ENCODE measurements at regions of chr3 and their contacts with region 1.

Region 1: DNA sequence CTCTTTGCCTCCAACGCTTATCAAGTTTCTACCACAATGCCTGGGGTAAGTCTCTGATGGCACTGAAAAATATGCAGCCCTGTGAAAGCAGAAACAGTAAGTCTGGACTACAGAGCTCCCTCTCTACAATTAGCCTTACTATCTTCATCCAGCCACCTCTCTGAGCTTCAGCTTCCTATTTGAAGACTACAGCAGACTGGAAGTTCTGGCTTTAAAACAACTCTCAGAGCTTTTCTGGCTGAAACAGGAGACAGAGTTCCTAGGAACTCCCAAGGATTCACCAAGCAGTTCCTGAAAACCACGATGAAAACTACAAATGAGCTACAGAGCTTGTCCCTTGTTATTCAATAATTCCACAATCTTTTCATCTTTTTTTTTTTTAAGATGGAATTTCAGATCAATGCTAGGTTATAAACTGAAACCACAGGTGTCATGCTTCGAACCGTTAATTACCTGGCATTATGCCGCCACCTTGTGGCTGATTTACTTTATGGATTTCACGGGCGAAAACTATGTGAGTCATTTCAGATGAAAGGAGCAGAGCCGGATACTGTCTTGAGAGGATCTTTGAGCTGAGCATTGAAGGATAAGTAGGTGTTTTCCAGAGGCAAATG is 3.9 kb downstream of the CRYGS start:
- DNase-seq: peak; percentile 82
- H3K4me3 ChIP-seq: no peak overlapping the region
- H3K27ac ChIP-seq: peak overlapping the region; percentile 46
- H3K4me1 ChIP-seq: peaks cover 20% of the 10 kb centered on the region
- H3K27me3 ChIP-seq: no peaks in the 10 kb centered on the region
- CTCF ChIP-seq: peak; percentile 43 to 66
- POLR2A ChIP-seq: no peak

Region 2: DNA sequence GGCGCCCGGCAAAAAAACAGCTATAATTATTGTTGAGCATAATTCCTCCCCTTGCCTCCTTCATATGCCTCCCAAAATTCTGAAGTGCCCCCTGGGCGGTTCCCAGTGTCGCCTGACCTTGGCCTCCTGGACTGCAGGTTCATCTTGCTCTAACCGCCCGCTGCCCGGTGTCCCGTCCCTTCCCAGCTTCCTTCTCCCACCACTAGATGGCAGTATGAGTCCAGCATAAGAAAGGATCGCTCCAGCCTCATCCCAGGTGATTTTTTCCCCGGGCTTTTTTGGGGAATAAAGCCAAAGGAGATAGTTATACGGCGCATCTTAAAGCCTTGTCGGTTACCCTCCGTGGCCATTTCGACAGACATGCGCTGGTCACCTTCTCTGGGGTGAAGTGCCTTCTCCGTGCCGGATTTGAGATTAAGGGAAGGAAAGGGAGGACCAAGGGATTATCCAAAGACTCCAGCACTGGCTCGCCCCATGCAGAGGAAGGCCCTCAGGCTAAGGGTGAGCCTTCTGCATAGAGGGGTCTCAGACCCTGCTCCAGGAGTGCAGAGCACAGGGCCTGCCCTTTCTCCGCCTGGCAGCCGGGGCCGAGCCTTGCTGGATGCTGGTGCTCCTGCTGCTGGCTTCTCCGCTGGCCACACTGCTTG is 556.7 kb before region 1 on chr3:
- CTCF ChIA-PET with region 1: interaction called, 187 read pairs
- POLR2A ChIA-PET with region 1: no interaction called
- dilution Hi-C with region 1: no loop called
- intact Hi-C with region 1: loop called (anchors 1 kb)
- DNase-seq: peak; percentile 55
- H3K4me3 ChIP-seq: no peak overlapping the region
- H3K27ac ChIP-seq: no peak overlapping the region
- H3K4me1 ChIP-seq: peaks cover 6% of the 10 kb centered on the region
- H3K27me3 ChIP-seq: no peaks in the 10 kb centered on the region
- CTCF ChIP-seq: peak; percentile 77 to 88
- POLR2A ChIP-seq: no peak

Region 3: DNA sequence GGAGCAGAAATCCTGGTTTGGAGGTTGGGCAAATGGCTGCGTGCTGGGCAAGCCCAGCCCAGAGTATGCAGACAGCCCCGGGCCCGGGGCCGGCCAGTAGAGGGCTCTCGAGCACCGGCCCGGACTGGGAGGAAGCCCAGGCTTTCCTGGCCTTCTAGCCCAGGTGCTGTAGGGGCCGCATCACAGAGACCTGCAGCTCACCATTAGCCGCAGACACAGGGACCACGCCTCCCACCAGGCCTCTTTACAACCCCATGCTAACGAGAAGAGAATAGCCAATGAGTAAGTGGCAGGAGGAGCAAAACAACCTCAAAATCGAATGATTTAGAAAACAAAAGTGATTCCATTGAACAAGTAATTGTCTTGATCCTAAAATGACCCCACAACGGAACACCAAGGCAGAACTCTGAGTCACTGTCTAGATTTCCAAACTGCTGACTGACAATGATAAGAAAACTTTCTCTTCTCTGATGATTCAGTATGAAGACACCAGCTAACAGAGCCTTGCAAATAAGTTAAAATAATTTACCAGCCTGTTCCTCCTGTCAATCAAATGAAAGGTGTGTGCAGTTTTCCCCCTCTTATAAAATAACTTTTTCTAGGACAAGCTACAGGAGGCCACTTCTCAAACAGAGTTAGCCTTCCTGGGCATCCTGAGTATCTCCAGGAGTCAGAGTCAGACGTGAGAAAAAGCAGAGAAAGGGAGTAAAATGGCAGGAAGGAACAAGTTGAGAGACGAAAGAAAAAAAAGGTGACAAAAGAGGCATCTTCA is 280.5 kb before region 1 on chr3:
- CTCF ChIA-PET with region 1: interaction called, 124 read pairs
- POLR2A ChIA-PET with region 1: no interaction called
- dilution Hi-C with region 1: no loop called
- intact Hi-C with region 1: loop called (anchors 1 kb)
- DNase-seq: peak; percentile 58
- H3K4me3 ChIP-seq: no peak overlapping the region
- H3K27ac ChIP-seq: no peak overlapping the region
- H3K4me1 ChIP-seq: no peaks in the 10 kb centered on the region
- H3K27me3 ChIP-seq: no peaks in the 10 kb centered on the region
- CTCF ChIP-seq: peak; percentile 87 to 98
- POLR2A ChIP-seq: no peak

Region 4: GRCh38 chr3:186277268-186277909 is 262.9 kb before region 1 on chr3:
- CTCF ChIA-PET with region 1: interaction called, 10 read pairs
- POLR2A ChIA-PET with region 1: no interaction called
- dilution Hi-C with region 1: no loop called
- intact Hi-C with region 1: no loop called
- DNase-seq: peak; percentile 49
- H3K4me3 ChIP-seq: no peak overlapping the region
- H3K27ac ChIP-seq: no peak overlapping the region
- H3K4me1 ChIP-seq: no peaks in the 10 kb centered on the region
- H3K27me3 ChIP-seq: peaks cover 0 to 3% of the 10 kb centered on the region in 2 experiments
- CTCF ChIP-seq: peak; percentile 20 to 41
- POLR2A ChIP-seq: no peak

Region 5: GRCh38 chr3:186472456-186473008 is 67.8 kb before region 1 on chr3:
- CTCF ChIA-PET with region 1: no interaction called
- POLR2A ChIA-PET with region 1: no interaction called
- dilution Hi-C with region 1: no loop called
- intact Hi-C with region 1: no loop called
- DNase-seq: no peak
- H3K4me3 ChIP-seq: no peak overlapping the region
- H3K27ac ChIP-seq: no peak overlapping the region
- H3K4me1 ChIP-seq: no peaks in the 10 kb centered on the region
- H3K27me3 ChIP-seq: no peaks in the 10 kb centered on the region
- CTCF ChIP-seq: no peak
- POLR2A ChIP-seq: no peak

Region 6: GRCh38 chr3:186551387-186551786 is 11.1 kb after region 1 on chr3:
- CTCF ChIA-PET with region 1: interaction called, 19 read pairs
- POLR2A ChIA-PET with region 1: no interaction called
- dilution Hi-C with region 1: no loop called
- intact Hi-C with region 1: no loop called
- DNase-seq: no peak
- H3K4me3 ChIP-seq: no peak overlapping the region
- H3K27ac ChIP-seq: no peak overlapping the region
- H3K4me1 ChIP-seq: no peaks in the 10 kb centered on the region
- H3K27me3 ChIP-seq: no peaks in the 10 kb centered on the region
- CTCF ChIP-seq: no peak
- POLR2A ChIP-seq: no peak

Region 7: GRCh38 chr3:186617038-186617946 is 77.0 kb after region 1 on chr3:
- CTCF ChIA-PET with region 1: interaction called, 37 read pairs
- POLR2A ChIA-PET with region 1: no interaction called
- dilution Hi-C with region 1: no loop called
- intact Hi-C with region 1: no loop called
- DNase-seq: peak; percentile 83
- H3K4me3 ChIP-seq: no peak overlapping the region
- H3K27ac ChIP-seq: no peak overlapping the region
- H3K4me1 ChIP-seq: peaks cover 5% of the 10 kb centered on the region
- H3K27me3 ChIP-seq: peaks cover 4 to 19% of the 10 kb centered on the region in 2 experiments
- CTCF ChIP-seq: peak; percentile 98
- POLR2A ChIP-seq: no peak

Measured in endothelial cell of umbilical vein (primary cell).